Aorta (tissue), 5 donors: ENCODE measurements at regions of chr13 and their contacts with region 1.

Region 1: GRCh38 chr13:91167706-91168385 is 179.6 kb upstream of the MIR17HG start:
- DNase-seq: no peak
- ATAC-seq: no peak
- H3K4me3 ChIP-seq: no peak overlapping the region
- H3K27ac ChIP-seq: no peak overlapping the region
- H3K4me1 ChIP-seq: no peaks in the 10 kb centered on the region
- H3K27me3 ChIP-seq: peaks cover 0 to 2% of the 10 kb centered on the region in 2 donors

Region 2: DNA sequence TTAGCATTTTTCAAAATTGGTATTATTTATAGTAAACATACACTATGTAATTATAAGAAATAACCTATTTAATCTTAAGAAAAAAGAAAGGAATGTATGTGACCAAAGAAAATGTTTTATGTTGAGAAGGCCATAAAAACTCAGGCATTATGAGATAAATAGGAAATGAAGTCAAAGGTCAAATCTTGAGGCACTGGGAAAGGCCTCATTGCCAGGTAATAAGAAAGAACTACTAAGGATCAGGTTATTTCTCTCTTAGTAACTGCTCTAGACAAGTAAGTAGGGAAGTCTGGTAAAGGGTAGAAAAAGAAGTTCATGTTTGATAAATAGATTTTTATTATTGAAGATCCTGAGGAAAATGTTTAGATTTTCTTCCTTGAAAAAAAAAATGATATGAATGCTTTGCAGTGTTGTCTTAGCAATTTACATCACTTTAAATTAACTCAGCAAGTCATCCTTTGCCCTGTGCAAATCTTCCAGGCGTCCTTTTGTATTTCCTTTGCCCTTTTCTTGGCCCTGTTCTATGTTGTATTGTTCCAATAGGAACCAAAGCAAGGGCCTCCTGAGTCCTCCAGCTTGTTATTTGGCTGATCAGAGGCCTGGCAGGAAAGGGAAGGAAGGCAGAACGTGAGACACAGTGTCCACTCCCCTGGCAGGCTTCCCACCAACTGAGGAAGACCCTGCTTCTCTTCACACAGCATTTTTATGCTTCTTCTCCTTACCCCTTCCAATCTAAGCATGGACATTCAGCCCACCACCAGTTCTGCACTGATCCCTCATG is 80.7 kb before region 1 on chr13:
- intact Hi-C with region 1: no loop called
- DNase-seq: no peak
- ATAC-seq: no peak
- H3K4me3 ChIP-seq: no peak overlapping the region
- H3K27ac ChIP-seq: no peak overlapping the region
- H3K4me1 ChIP-seq: no peaks in the 10 kb centered on the region
- H3K27me3 ChIP-seq: no peaks in the 10 kb centered on the region

Region 3: DNA sequence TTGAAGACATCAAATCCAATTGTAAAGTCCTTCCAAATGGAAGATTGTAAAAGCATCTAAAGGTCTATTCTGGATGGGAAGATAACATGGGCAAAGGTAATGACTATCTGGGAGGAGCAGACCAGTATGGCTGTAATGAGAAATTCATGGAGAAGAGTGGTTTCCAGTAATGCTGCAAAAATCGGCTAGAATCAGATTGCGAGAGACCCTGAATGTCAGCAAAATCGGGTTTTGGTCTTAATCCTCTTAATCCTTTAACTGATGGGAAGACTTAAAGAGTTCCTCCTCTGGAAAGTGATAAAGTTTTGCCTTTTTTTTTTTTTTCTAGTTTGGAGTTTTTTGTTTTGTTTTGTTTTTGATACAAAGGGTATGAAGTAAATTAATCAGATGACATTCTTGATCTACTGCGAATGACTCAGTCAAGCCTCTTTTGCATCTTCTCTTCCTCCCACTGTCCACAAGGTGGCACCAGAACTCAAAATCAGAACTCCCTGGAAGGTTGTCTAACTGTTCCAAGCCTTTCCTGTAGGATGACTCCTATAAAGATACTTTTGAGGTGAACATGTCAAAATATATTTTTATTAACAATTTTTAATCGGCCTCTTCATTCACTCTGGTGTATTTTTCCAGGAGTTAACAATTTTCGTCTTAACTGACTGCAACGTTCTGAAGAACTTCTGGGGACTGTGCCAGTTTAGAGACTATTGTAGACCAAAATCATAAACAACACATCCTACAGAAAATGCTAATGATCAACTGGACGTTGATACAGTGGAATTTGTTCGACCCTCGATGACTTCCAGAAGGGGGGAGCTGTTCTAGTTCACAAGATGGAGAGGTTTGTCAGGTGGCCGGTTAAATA is 33.7 kb before region 1 on chr13:
- intact Hi-C with region 1: loop called (anchors 5 kb)
- DNase-seq: no peak
- ATAC-seq: peak; percentile 82
- H3K4me3 ChIP-seq: no peak overlapping the region
- H3K27ac ChIP-seq: no peak overlapping the region
- H3K4me1 ChIP-seq: peaks cover 0 to 7% of the 10 kb centered on the region in 2 donors
- H3K27me3 ChIP-seq: no peaks in the 10 kb centered on the region

Region 4: GRCh38 chr13:91144486-91144885 is 23.4 kb before region 1 on chr13:
- intact Hi-C with region 1: no loop called
- DNase-seq: no peak
- ATAC-seq: no peak
- H3K4me3 ChIP-seq: no peak overlapping the region
- H3K27ac ChIP-seq: no peak overlapping the region
- H3K4me1 ChIP-seq: no peaks in the 10 kb centered on the region
- H3K27me3 ChIP-seq: no peaks in the 10 kb centered on the region

Region 5: DNA sequence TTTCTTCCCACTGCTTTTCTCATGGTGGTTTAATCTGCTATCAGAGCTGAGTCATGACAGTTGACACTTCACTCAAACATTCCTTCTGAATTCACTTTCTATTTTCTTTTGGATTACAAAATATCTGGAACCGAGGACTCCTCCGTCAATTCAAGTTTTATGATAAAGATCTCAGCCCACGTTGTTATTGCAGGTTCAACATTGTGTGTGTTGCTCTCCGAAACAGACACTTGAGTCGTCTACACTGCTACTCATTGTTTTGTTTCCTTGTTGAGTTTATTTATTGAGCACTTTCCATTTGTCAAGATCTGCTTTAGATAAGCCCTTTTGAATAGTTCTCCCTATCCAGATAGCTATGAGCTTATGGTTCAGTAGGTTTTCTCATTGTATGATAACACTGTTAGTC is 1422.7 kb after region 1 on chr13:
- intact Hi-C with region 1: no loop called
- DNase-seq: no peak
- ATAC-seq: no peak
- H3K4me3 ChIP-seq: no peak overlapping the region
- H3K27ac ChIP-seq: no peak overlapping the region
- H3K4me1 ChIP-seq: no peaks in the 10 kb centered on the region
- H3K27me3 ChIP-seq: no peaks in the 10 kb centered on the region